ENCODE measurements at regions of chr3 and their contacts with region 1.

Region 1: DNA sequence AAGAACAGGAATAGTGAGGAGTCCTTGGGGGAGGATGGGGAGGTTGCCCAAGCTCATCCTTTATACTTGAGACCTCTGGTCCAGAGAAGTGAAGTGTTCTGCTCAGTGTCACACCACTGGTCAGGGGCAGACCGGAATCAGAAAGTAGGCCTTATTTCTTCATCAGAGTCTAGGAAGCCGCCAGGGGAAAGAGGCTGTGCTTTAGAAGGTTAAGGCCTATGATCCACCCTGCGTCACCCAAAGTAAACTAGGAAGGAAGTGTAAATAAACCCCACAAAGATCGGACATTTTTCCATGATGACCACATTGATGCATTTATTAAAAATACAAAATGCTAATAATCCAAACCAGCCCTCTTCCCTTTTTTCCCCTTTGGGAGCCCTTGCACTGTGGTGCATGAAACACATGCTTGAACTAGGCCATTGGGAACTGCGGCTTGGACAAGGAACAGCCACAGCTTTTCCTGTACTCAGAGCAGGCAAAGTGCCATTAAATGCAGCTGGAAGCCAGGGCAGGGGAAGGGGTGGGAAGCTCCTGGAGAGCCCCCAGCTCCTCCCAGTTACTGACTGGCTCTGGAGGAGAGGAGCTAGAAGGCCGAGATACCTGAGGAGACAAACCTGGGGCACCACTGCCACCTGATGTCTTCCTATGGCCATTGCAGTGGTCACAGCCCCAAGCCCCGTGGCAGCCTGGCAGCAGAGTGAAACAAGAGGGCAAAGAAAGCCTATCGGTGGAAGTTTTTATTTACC is 37.0 kb downstream of the CDC25A start:
- DNase-seq: peak; percentile 81
- ATAC-seq: peak; percentile 98
- H3K4me3 Mint-ChIP-seq: no peak overlapping the region
- H3K27ac Mint-ChIP-seq: no peak overlapping the region
- H3K4me1 Mint-ChIP-seq: peaks cover 2% of the 10 kb centered on the region
- H3K27me3 Mint-ChIP-seq: no peaks in the 10 kb centered on the region

Region 2: GRCh38 chr3:47824541-47825473 is 326.4 kb before region 1 on chr3:
- CTCF ChIA-PET with region 1: interaction called, 24 read pairs
- POLR2A ChIA-PET with region 1: no interaction called
- DNase-seq: peak; percentile 80
- ATAC-seq: peak; percentile 100
- H3K4me3 Mint-ChIP-seq: peak overlapping the region; percentile 89
- H3K27ac Mint-ChIP-seq: peak overlapping the region; percentile 81
- H3K4me1 Mint-ChIP-seq: peaks cover 34% of the 10 kb centered on the region
- H3K27me3 Mint-ChIP-seq: no peaks in the 10 kb centered on the region

Region 3: DNA sequence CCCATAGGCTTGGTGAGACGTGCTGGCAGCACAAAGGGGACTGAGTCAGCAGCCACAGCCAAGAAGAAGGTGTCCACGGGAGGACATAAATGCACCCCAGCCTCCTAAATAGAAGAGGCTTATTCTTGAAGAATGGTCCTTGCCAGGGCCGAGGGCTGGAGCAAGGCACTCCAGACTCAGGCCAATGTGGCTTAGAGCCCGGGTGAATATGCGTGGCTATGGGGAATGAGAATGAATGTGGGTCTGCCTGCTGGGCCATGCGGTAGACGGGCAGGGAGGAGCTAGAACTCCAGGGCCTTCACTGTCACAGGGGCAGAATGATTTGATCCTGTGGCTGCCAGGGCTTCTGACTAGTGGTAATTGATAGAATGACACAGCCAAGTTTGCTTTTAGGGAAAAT is 314.2 kb before region 1 on chr3:
- CTCF ChIA-PET with region 1: interaction called, 26 read pairs
- POLR2A ChIA-PET with region 1: no interaction called
- DNase-seq: no peak
- ATAC-seq: no peak
- H3K4me3 Mint-ChIP-seq: no peak overlapping the region
- H3K27ac Mint-ChIP-seq: no peak overlapping the region
- H3K4me1 Mint-ChIP-seq: no peaks in the 10 kb centered on the region
- H3K27me3 Mint-ChIP-seq: no peaks in the 10 kb centered on the region

Region 4: GRCh38 chr3:47996440-47996839 is 154.8 kb before region 1 on chr3:
- CTCF ChIA-PET with region 1: interaction called, 12 read pairs
- POLR2A ChIA-PET with region 1: no interaction called
- DNase-seq: no peak
- ATAC-seq: no peak
- H3K4me3 Mint-ChIP-seq: no peak overlapping the region
- H3K27ac Mint-ChIP-seq: no peak overlapping the region
- H3K4me1 Mint-ChIP-seq: no peaks in the 10 kb centered on the region
- H3K27me3 Mint-ChIP-seq: no peaks in the 10 kb centered on the region

Region 5: DNA sequence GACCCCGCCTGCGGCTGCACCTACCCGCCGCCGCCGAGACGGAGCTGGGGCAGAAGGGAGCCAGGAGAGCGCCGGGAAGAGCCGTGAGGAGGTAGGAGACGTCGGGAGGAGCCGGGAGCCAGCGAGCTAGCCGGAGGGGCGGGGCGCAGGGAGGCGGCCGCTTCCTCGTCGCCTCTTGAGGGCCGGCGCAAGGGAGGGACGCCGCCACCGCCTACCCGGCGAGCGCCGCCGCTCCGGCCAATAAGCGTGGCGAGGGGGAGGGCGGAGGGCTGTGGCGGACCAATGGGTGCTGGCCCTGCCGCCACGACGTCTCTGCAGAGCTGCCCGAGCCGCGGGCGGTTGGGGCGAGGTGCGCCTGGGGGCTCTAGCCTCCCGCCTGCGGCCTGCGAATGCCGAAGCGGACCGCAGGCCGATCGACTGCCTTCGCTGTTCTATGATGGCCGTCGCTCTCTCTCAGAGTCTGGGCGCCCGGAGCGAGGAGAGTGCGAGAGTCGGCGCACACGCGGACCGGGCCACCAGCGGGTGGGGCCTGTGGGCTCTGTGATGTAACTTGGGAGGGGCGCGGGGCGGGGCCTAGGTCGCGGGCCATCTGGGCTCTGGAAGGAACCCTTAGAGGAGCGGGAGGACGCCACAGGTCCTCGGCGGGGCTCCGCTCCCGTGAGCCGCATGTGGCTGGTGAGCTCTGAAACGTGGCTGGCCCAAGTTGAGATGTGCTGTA is 62.3 kb before region 1 on chr3:
- CTCF ChIA-PET with region 1: interaction called, 20 read pairs
- POLR2A ChIA-PET with region 1: no interaction called
- DNase-seq: peak; percentile 96
- ATAC-seq: peak; percentile 98
- H3K4me3 Mint-ChIP-seq: peak overlapping the region; percentile 90
- H3K27ac Mint-ChIP-seq: peak overlapping the region; percentile 99
- H3K4me1 Mint-ChIP-seq: peaks cover 33% of the 10 kb centered on the region
- H3K27me3 Mint-ChIP-seq: peaks cover 2% of the 10 kb centered on the region

Region 6: GRCh38 chr3:48112813-48113212 is 38.4 kb before region 1 on chr3:
- CTCF ChIA-PET with region 1: interaction called, 15 read pairs
- POLR2A ChIA-PET with region 1: no interaction called
- DNase-seq: peak; percentile 23
- ATAC-seq: no peak
- H3K4me3 Mint-ChIP-seq: peak overlapping the region; percentile 4
- H3K27ac Mint-ChIP-seq: peak overlapping the region; percentile 66
- H3K4me1 Mint-ChIP-seq: peaks cover 32% of the 10 kb centered on the region
- H3K27me3 Mint-ChIP-seq: no peaks in the 10 kb centered on the region

Measured in activated CD8-positive, alpha-beta T cell treated with anti-CD3 and anti-CD28 coated beads, Interleukin-2, amount 10 ng/mL, durations not matched to agents 7 days and 5 days (primary cell).